ENCODE measurements at regions of chr2 and their contacts with region 1.

Region 1: DNA sequence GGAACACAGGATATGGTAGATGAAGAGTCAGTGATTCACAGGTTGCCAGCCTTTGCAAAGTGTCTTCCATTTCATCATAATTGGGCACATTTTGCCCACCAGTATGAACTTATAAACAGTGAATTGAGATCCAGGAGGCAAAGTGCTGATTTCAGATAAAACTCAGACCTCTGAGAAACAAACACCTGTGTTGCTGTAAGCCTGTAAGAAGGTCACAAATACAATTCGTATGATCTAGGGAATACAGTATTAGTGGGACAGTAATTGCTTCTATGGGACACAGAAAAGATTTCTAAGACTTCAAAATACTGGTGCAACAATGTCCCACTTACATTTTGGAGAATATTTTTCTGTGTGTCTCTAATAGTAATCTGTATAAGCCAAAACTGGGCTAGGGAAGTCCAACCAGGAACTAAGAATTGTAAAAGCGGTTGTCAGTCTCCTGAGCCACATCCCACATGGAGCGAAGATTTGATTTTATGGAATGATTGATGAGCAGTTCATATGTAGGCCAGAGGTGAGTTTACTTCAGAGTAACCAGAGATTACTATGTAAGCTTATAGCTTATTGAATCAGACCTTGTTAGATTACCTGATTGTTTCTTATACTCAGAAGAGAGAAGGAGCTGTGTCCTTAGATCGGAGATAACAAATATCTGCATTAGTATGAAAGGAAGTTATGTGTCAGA is 728.4 kb downstream of the LRRTM4 start:
- DNase-seq: no peak
- H3K4me3 ChIP-seq: no peak overlapping the region
- H3K27ac ChIP-seq: no peak overlapping the region
- H3K4me1 ChIP-seq: no peaks in the 10 kb centered on the region
- H3K27me3 ChIP-seq: no peaks in the 10 kb centered on the region
- CTCF ChIP-seq: no peak
- POLR2A ChIP-seq: no peak

Region 2: GRCh38 chr2:78585871-78586270 is 1792.1 kb after region 1 on chr2:
- intact Hi-C with region 1: loop called (anchors 5 kb)
- DNase-seq: no peak
- H3K4me3 ChIP-seq: no peak overlapping the region
- H3K27ac ChIP-seq: no peak overlapping the region
- H3K4me1 ChIP-seq: no peaks in the 10 kb centered on the region
- H3K27me3 ChIP-seq: no peaks in the 10 kb centered on the region
- CTCF ChIP-seq: no peak
- POLR2A ChIP-seq: no peak